ENCODE measurements at regions of chr12 and their contacts with region 1.

Region 1: GRCh38 chr12:49060237-49061156 is at the start of gene KMT2D:
- DNase-seq: peak; percentile 84
- ATAC-seq: peak; percentile 73
- H3K4me3 ChIP-seq: peak within 1 kb of the TSS; percentile 95 to 100 (median 98)
- H3K27ac ChIP-seq: peak within 1 kb of the TSS; percentile 94
- H3K4me1 ChIP-seq: peaks cover 59% of the 10 kb centered on the region
- H3K27me3 ChIP-seq: no peaks in the 10 kb centered on the region; a peak in 1 of 5 replicates
- CTCF ChIP-seq: peak; percentile 45
- EP300 ChIP-seq: 0 out of 4 replicates have a peak, but pooled peaks of 1 of the 2 experiments have one; percentile 44
- POLR2A ChIP-seq: peak; percentile 38 to 48
- RAD21 ChIP-seq: no peak
- total RNA-seq, gene KMT2D: 10.4 and 25.7 TPM in 2 replicates

Region 2: DNA sequence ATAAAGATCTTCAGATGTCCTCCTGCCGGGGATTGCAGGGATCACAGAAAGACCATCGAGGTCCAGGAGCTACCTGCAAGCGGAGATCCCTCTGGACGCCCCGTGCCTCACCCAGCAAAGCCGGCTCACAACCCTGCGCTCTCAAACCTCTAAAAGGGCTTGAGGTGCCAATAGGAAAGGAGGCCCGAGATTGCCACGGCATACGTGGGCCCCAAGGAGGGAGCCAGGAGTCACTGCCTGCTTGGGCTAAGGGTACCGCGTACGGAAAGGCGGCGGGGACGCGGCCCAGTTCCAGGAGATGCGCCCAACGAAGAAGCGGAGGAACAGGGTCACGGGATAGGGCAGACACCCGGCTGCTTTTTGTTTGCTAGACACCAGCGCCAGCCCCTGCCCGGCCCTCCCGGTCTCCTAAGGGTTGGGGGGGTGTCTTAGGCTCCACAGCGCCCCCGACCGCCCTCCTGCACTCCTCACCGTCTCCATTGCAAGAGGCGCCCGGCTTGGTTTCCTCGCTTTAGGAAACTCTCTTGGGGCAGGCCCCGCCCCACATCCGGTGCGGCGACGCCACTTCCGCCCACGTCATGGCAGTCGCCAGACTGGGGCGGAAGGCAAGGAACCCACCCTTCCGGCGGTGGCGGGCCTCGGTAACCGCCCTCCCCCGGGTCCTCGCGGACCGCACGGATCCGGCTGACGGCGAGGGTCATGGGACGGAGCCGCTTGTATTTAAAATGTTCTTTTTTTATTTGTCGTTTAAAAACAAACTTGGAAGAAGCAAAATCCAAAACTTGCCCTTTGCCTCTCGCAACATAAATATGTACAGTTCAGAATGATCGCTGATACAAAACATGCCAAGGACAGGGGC is 42.0 kb before region 1 on chr12 and contains the start of gene PRKAG1:
- CTCF ChIA-PET with region 1: no interaction called
- POLR2A ChIA-PET with region 1: interaction called, 3 read pairs
- in situ Hi-C with region 1: no loop called
- intact Hi-C with region 1: loop called (anchors 5 kb)
- DNase-seq: peak; percentile 91
- ATAC-seq: peak; percentile 89
- H3K4me3 ChIP-seq: peak within 1 kb of the TSS; percentile 74 to 93 (median 85)
- H3K27ac ChIP-seq: peak within 1 kb of the TSS; percentile 86
- H3K4me1 ChIP-seq: peaks cover 20% of the 10 kb centered on the region
- H3K27me3 ChIP-seq: no peaks in the 10 kb centered on the region
- CTCF ChIP-seq: peak; percentile 83
- EP300 ChIP-seq: peak in 1 of 2 experiments; percentile 24; a peak in 1 of 4 replicates
- POLR2A ChIP-seq: peak; percentile 78 to 82
- RAD21 ChIP-seq: peak; percentile 25; the same call in 1 of the 2 replicates
- total RNA-seq, gene PRKAG1: 32.8 and 37.6 TPM in 2 replicates

Region 3: DNA sequence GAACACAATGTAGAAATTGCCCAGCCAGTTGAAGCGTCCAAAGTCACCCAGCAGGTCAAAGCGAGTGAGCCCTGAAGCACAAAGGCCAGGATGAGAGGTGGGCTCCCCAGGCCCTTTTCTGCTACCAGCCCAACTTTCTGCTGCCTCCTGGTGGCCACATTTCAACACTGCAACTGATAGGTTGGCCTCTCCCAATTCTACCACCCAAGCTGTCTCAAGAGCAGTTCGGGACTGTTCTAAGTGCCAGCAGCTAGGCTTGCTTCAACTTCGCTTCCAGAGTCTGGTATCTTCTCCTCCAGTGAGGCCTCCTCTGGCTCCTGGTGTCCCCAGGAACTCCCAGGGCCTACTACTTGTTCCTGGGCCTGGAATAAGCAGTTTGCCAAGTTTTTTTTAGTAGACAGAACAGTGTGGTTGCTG is 37.5 kb after region 1 on chr12:
- CTCF ChIA-PET with region 1: interaction called, 9 read pairs
- POLR2A ChIA-PET with region 1: interaction called, 4 read pairs
- in situ Hi-C with region 1: no loop called
- intact Hi-C with region 1: loop called (anchors 1 kb)
- DNase-seq: peak; percentile 28
- ATAC-seq: peak; percentile 65
- H3K4me3 ChIP-seq: no peak overlapping the region
- H3K27ac ChIP-seq: no peak overlapping the region
- H3K4me1 ChIP-seq: peaks cover 11% of the 10 kb centered on the region; the same call in 1 of the 2 replicates
- H3K27me3 ChIP-seq: peaks cover 3 to 20% of the 10 kb centered on the region in 2 experiments; a peak in 4 of 5 replicates
- CTCF ChIP-seq: peak; percentile 83
- EP300 ChIP-seq: no peak
- POLR2A ChIP-seq: no peak
- RAD21 ChIP-seq: peak; percentile 50

Region 4: GRCh38 chr12:49121047-49121696 is 60.7 kb after region 1 on chr12:
- CTCF ChIA-PET with region 1: interaction called, 8 read pairs
- POLR2A ChIA-PET with region 1: interaction called, 4 read pairs
- in situ Hi-C with region 1: loop called (anchors 5 kb)
- intact Hi-C with region 1: loop called (anchors 2 kb)
- DNase-seq: peak; percentile 79
- ATAC-seq: peak; percentile 72
- H3K4me3 ChIP-seq: no peak overlapping the region
- H3K27ac ChIP-seq: no peak overlapping the region
- H3K4me1 ChIP-seq: peaks cover 9% of the 10 kb centered on the region
- H3K27me3 ChIP-seq: peaks cover 0 to 9% of the 10 kb centered on the region in 2 experiments; a peak in 2 of 5 replicates
- CTCF ChIP-seq: peak; percentile 88
- EP300 ChIP-seq: no peak
- POLR2A ChIP-seq: no peak
- RAD21 ChIP-seq: peak; percentile 51; the same call in 1 of the 2 replicates

Measured in HepG2 (cell line).